Activated T-helper 1 cell treated with anti-CD3 and anti-CD28 coated beads, Interleukin-12 subunit alpha, Interleukin-12 subunit beta, Interleukin-2, Interleukin-4 antibody, amounts not matched to agents 30 ng/mL and 10 ng/mL and 1 ng/mL, durations not matched to agents 14 hours and 24 hours and 36 hours (primary cell): ENCODE measurements at regions of chr11 and their contacts with region 1.

Region 1: DNA sequence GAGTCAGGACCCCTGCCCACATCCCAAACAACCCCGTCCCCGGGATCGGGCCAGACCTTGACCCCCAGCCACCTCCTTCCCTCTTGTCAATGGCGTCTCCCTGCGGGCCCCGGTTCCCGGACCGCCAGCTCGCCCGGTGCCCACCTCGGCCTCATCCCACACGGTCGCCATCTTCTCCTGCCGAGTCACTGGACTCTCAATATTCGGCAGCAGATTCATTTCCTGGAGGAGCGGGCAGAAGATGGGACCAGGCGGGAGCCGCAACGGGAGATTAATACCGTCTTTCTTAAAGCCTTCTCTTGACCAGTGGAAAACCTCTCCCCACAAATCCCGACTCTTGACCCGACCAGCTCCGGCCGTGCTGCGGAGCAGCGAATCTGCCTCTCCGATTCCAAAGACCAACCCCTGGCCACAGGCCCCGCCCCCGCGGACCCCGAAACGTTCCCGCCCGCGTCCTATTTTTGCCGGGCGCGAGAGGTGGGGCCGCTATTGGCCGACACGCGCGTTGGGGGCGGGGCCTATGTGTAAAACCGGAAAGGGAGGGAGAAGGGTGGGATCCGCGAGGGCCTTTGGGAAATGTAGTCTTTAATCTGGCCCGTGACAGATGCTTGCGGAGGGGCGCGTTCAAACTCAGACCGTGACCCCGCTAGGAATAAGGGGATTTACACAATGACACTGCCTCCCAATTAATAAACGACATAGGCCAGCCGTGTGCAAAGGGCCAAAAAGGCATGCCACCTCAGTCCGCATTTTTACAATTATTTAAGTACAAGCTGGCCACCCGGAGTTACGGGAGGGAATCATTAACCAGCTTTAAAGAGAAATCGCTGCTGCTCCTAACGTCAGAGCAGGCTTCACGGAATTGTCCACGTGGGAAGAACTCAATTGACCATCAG is at the start of gene PSMC3:
- DNase-seq: peak; percentile 96
- H3K4me3 Mint-ChIP-seq: peak within 1 kb of the TSS; percentile 95
- H3K27ac Mint-ChIP-seq: peak within 1 kb of the TSS; percentile 96
- H3K4me1 Mint-ChIP-seq: peaks cover 28% of the 10 kb centered on the region
- H3K27me3 Mint-ChIP-seq: no peaks in the 10 kb centered on the region
- total RNA-seq, gene PSMC3: 219 and 222 TPM in 2 replicates

Region 2: DNA sequence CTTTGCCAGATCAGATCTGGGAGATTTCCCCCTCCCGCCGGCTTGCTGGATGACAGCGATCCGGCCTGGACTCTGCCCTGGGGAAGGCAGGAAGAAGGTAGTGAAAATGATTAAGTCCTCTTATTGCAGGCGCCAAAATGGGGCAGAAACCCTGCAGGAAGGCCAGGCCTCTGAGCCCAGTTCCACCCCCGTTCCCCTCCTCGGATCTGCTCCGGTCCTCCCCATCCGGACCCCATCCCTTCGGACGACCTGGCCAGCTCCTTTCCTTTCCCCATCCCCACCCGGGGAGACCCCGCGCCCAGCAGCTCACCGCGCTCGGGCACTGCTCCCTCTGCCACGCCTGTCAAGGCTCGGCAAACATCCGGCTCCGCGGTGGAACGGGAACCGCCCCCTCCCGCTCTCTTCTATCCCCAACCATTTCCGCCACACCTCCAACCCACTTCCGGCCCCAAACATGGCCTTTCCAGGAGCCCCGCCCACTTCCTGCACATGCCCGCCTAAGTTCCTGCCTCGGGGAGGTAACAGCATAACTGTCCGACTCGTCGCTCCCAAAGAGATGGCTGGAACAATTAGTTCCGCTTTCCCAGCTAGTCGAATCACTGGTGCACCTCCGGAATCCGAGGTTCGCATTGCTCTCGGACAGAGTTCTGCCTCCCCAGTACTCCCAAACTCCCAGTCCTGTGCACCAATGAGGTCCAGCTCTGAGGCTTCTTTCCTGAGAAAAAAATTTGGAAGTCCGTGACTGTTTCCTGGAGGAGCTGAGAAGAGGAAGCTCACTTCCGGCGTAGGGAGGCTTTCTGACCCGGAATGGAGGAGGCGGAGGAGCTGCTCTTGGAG is 725.9 kb before region 1 on chr11 and contains the starts of genes ARHGAP1 and ZNF408:
- intact Hi-C with region 1: loop called (anchors 1 kb)
- DNase-seq: peak; percentile 98
- H3K4me3 Mint-ChIP-seq: peak within 1 kb of the TSS; percentile 99
- H3K27ac Mint-ChIP-seq: peak within 1 kb of the TSS; percentile 95
- H3K4me1 Mint-ChIP-seq: peaks cover 48% of the 10 kb centered on the region
- H3K27me3 Mint-ChIP-seq: peaks cover 2% of the 10 kb centered on the region
- total RNA-seq, gene ARHGAP1: 69.8 and 71.7 TPM in 2 replicates
- total RNA-seq, gene ZNF408: 12.9 and 13.9 TPM in 2 replicates

Region 3: DNA sequence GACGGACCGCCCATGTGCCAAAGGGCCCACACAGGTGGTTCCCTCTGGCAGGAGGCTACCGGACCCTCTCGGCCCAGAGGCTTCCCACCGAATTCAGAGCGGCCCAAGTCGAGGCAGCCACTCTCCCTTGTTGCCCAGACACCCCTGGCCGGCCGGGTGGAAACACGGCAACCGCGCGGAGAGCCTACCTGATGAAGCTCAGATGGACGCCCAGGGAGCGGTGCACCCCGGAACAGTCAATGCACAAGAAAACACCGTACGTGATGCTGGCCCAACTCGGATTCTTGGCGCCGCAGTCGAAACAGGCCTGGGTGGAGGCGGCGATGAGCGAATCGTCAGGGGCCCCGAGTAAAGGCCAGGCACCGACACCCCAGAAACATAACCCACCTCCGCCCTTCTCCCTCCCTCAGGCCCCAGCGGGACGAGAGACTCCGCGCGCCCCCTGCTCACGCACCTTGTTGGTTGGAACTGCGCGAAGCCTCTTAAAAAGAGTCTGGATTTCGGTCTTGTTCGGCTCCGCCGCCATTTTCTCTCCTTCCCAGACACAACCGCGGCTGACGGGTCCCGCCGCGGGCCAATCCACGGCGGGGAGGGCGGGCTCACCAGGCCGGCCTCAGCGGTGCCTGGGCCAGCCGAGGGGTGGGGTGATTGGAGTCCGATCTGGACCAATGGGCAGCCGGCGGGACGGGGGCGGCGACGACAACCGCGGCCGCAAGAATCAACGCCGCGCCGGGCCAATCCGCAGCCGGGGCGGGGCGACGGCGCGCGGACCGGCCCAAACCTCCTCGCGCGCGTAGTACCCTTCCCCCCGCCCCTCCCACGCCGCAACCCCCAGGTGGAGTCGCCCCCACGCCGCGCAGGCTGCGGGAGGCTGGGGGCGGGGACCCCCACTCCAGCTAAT is 249.7 kb before region 1 on chr11 and contains the start of gene ARFGAP2:
- intact Hi-C with region 1: loop called (anchors 1 kb)
- DNase-seq: peak; percentile 96
- H3K4me3 Mint-ChIP-seq: peak within 1 kb of the TSS; percentile 97
- H3K27ac Mint-ChIP-seq: peak within 1 kb of the TSS; percentile 100
- H3K4me1 Mint-ChIP-seq: peaks cover 36% of the 10 kb centered on the region
- H3K27me3 Mint-ChIP-seq: no peaks in the 10 kb centered on the region
- total RNA-seq, gene ARFGAP2: 111 and 116 TPM in 2 replicates

Region 4: DNA sequence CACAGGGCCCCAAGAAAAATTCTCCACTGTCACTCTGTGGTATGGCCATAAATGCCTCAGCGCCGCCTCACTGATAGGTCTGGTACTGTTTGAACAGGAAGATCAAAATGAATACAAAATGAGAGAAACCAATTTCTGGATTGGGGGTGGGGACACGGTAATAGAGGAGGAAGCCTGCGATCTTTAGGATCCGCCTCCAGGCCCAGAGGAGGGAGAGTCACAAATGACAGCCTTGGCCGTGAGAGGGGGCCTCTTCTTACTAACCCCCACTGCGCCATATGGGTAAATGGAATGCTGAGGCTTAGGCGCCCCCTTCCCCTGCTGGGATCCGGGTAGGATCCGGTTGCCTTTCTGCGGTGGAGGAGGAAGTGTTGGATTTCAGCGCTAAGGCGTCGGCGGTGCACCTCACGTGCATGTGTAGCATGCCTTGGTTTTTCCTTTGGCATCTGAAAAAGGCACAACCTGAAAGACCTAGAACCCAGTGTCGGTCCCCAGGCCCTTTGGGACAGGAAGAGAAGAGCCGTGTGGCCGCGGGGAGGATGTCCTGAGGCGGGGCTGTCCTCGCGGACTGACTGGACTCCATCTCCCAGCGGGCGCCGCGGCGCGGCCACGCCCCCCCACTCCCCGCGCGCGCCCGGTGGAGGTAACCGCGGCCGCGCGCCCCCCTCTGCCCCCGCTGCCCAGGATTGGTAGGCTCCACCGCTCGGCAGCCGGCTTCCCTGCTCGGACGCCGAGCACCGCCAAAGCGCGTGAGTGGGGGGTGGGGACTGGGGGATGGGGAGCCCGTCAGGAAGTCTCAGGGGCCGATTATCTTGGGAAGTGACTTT is 157.1 kb before region 1 on chr11:
- intact Hi-C with region 1: loop called (anchors 1 kb)
- DNase-seq: peak; percentile 73
- H3K4me3 Mint-ChIP-seq: peak overlapping the region; percentile 81
- H3K27ac Mint-ChIP-seq: peak overlapping the region; percentile 92
- H3K4me1 Mint-ChIP-seq: peaks cover 54% of the 10 kb centered on the region
- H3K27me3 Mint-ChIP-seq: no peaks in the 10 kb centered on the region

Region 5: DNA sequence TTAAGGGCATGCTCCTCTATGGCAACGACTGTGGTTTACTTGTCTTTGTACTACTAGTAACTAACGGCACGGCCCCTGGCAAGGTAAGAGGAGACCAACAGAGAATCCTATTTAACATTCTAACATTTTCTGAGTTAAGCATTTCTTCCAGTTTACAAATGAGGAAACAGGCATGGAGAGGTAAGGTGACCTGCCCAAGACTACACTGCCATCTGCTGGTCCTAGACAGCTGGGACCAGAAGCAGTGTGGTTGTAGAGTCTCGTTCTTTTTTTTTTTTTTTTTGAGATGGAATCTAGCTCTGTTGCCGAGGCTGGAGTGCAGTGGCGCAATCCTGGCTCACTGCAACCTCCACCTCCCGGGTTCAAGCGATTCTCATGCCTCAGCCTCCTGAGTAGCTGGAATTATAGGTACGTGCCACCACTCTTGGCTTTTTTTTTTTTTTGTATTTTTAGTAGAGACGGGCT is 27.9 kb after region 1 on chr11:
- intact Hi-C with region 1: loop called (anchors 2 kb)
- DNase-seq: peak; percentile 57
- H3K4me3 Mint-ChIP-seq: no peak overlapping the region
- H3K27ac Mint-ChIP-seq: no peak overlapping the region
- H3K4me1 Mint-ChIP-seq: peaks cover 4% of the 10 kb centered on the region
- H3K27me3 Mint-ChIP-seq: no peaks in the 10 kb centered on the region

Region 6: GRCh38 chr11:47642099-47642855 is 216.0 kb after region 1 on chr11 and contains the start of gene MTCH2:
- intact Hi-C with region 1: loop called (anchors 1 kb)
- DNase-seq: peak; percentile 95
- H3K4me3 Mint-ChIP-seq: peak within 1 kb of the TSS; percentile 96
- H3K27ac Mint-ChIP-seq: peak within 1 kb of the TSS; percentile 97
- H3K4me1 Mint-ChIP-seq: peaks cover 30% of the 10 kb centered on the region
- H3K27me3 Mint-ChIP-seq: no peaks in the 10 kb centered on the region
- total RNA-seq, gene MTCH2: 116 and 118 TPM in 2 replicates

Region 7: DNA sequence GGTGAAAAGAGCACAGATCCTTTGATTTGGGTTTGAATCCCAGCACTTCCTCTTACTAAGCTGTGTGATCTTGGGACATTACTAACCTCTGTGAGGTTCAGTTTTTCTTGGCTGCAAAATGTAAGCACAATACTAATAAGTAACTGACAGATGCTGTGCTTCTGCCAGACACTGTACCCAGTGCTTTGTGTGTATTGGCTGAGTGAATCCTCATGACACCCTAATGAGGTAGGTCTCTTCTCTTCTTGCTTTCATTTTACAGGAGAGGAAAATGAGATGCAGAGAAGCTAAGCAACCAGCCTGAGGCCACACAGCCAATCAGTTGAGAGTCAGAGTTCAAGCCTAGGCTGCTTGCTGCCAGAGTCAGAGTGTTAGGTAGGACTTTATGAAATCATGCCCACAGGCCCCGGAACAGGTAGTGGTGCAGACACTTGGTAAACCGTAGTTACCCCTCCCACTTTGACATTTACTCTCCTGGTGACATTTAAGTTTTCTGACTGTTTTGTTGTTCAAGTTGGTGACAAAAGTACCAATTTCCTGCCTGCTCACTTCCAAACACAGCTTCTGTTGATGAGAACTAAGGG is 575.2 kb after region 1 on chr11:
- intact Hi-C with region 1: no loop called
- DNase-seq: peak; percentile 87
- H3K4me3 Mint-ChIP-seq: peak overlapping the region; percentile 72
- H3K27ac Mint-ChIP-seq: peak overlapping the region; percentile 97
- H3K4me1 Mint-ChIP-seq: peaks cover 82% of the 10 kb centered on the region
- H3K27me3 Mint-ChIP-seq: no peaks in the 10 kb centered on the region